ENCODE measurements at regions of chr6 and their contacts with region 1.

Region 1: GRCh38 chr6:53410508-53411258 is 61.9 kb upstream of the ELOVL5 start:
- DNase-seq: peak; percentile 37
- ATAC-seq: peak; percentile 100
- H3K4me3 ChIP-seq: no peak overlapping the region
- H3K27ac ChIP-seq: no peak overlapping the region
- H3K4me1 ChIP-seq: peaks cover 4% of the 10 kb centered on the region; the same call in 1 of the 2 replicates
- H3K27me3 ChIP-seq: no peaks in the 10 kb centered on the region
- CTCF ChIP-seq: peak; percentile 85 to 92 (median 86)
- EP300 ChIP-seq: 0 out of 4 replicates have a peak, but pooled peaks of 1 of the 2 experiments have one; percentile 14
- POLR2A ChIP-seq: no peak
- RAD21 ChIP-seq: peak; percentile 86

Region 2: DNA sequence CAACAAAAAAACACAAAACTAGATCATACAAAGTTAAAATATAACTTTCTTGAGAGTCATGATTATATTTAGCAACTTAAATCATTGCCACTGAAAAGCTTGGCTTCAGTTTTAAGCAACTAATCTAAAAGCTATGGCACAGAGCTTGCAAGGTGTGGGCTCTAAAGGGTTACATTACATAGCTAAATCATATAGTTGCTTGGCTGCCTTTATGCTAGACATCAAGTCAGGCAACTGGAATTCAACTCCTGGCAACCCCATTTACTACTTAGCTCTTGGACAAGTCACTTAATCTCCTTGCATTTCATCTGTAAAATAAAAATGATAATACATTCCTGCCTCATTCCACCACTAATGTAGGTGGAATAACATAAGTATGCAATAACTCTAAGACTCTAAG is 221.1 kb before region 1 on chr6:
- CTCF ChIA-PET with region 1: interaction called, 19 read pairs
- POLR2A ChIA-PET with region 1: no interaction called
- RAD21 ChIA-PET with region 1: interaction called, 20 read pairs
- SMC1A ChIA-PET with region 1: interaction called, 4 read pairs
- in situ Hi-C with region 1: no loop called
- intact Hi-C with region 1: no loop called
- DNase-seq: no peak
- ATAC-seq: peak; percentile 20; the same call in 2 of the 3 replicates
- H3K4me3 ChIP-seq: no peak overlapping the region
- H3K27ac ChIP-seq: no peak overlapping the region
- H3K4me1 ChIP-seq: no peaks in the 10 kb centered on the region; the same call in 1 of the 2 replicates
- H3K27me3 ChIP-seq: no peaks in the 10 kb centered on the region
- CTCF ChIP-seq: no peak
- EP300 ChIP-seq: no peak
- POLR2A ChIP-seq: no peak
- RAD21 ChIP-seq: no peak

Region 3: GRCh38 chr6:53294095-53294494 is 116.6 kb before region 1 on chr6:
- CTCF ChIA-PET with region 1: interaction called, 14 read pairs
- POLR2A ChIA-PET with region 1: no interaction called
- RAD21 ChIA-PET with region 1: interaction called, 3 read pairs
- SMC1A ChIA-PET with region 1: interaction called, 6 read pairs
- in situ Hi-C with region 1: no loop called
- intact Hi-C with region 1: no loop called
- DNase-seq: no peak
- ATAC-seq: peak; percentile 61
- H3K4me3 ChIP-seq: no peak overlapping the region
- H3K27ac ChIP-seq: no peak overlapping the region
- H3K4me1 ChIP-seq: no peaks in the 10 kb centered on the region
- H3K27me3 ChIP-seq: no peaks in the 10 kb centered on the region
- CTCF ChIP-seq: peak; percentile 36 to 61 (median 60); a peak in 5 of 6 replicates
- EP300 ChIP-seq: no peak
- POLR2A ChIP-seq: no peak
- RAD21 ChIP-seq: peak; percentile 58

Region 4: DNA sequence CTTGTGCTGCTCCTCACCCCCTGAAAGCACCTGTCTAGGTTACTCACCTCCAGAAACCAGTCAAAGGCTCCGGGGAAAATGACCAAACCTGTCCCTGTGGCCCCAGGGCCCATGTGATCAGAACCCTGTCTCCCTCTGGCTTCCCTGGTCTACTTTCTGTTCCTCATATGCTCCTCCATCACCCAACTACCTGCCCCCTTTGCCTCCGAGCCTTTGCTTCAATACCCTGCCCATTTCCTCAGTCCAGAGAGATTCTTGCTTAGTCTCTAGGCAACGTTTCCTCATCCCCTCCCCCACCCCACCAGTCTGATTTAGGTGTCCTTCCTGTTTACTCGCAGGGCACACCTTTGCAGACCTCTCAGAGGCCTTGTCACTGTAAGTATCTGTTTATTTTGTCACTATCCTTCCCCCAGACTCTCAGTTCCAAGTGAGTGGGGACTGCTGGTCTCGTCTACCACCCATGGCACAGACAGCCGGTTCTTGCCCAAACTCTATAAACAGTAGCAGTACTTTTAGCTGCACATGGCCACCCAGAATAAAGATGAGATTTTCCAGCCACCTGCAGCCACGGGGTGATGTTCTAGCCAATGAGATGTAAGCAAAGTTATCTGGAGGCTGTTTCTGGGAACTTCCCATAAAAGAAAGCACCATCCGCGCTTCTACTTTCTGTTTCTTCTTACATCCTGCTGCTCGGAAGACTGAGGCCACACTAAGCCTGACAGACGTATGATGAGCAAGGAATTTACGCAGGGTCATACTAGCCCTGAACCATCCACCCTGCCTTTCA is 75.3 kb before region 1 on chr6:
- CTCF ChIA-PET with region 1: interaction called, 10 read pairs
- POLR2A ChIA-PET with region 1: no interaction called
- RAD21 ChIA-PET with region 1: interaction called, 6 read pairs
- SMC1A ChIA-PET with region 1: interaction called, 24 read pairs
- in situ Hi-C with region 1: no loop called
- intact Hi-C with region 1: no loop called
- DNase-seq: peak; percentile 88
- ATAC-seq: peak; percentile 90
- H3K4me3 ChIP-seq: peak overlapping the region; percentile 72
- H3K27ac ChIP-seq: peak overlapping the region; percentile 85
- H3K4me1 ChIP-seq: peaks cover 22% of the 10 kb centered on the region
- H3K27me3 ChIP-seq: no peaks in the 10 kb centered on the region
- CTCF ChIP-seq: no peak
- EP300 ChIP-seq: peak in 1 of 2 experiments; percentile 68; a peak in 2 of 4 replicates
- POLR2A ChIP-seq: peak; percentile 34; the same call in 1 of the 2 replicates
- RAD21 ChIP-seq: no peak

Region 5: DNA sequence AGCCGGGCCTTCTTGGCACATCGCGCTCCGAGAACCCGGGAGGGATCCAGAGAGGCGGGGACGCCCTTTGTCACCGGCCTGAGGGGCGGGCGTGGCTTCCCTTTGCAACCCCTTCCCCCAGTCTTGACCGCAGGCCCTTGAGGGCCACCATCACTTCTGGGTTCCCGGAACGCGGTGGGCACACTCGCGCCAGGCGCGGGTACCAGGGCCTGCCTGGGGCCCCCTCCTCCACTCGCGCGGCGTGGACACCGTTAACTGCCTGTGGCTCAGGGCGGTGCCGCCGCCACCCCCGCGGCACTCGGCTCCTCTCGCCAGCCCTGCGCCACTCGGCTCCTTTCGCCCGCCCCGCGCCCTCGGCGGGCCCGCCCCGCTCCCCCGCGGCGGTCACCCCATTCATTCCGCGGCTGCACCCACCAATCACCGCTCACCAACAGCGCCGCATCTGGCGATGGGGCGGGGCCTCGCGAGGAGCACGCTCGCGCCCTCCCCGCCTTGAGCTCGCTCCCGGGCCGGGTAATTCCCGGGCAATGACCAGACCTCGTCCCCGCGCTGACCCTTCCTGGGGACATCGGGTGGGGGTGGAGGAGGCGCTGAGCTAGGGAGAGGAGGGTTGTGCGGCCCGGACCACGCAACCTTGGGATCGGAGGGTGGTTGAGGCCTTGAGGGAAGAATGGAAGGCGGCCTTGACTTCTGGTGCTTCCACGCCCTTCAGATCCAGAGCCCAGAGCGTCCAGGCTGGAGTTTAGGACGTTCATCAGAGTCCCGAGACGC is 51.4 kb before region 1 on chr6:
- CTCF ChIA-PET with region 1: interaction called, 14 read pairs
- POLR2A ChIA-PET with region 1: interaction called, 6 read pairs
- RAD21 ChIA-PET with region 1: interaction called, 5 read pairs
- SMC1A ChIA-PET with region 1: interaction called, 6 read pairs
- in situ Hi-C with region 1: no loop called
- intact Hi-C with region 1: loop called (anchors 2 kb)
- DNase-seq: peak; percentile 78
- ATAC-seq: peak; percentile 95
- H3K4me3 ChIP-seq: peak overlapping the region; percentile 76
- H3K27ac ChIP-seq: peak overlapping the region; percentile 86
- H3K4me1 ChIP-seq: peaks cover 17% of the 10 kb centered on the region
- H3K27me3 ChIP-seq: no peaks in the 10 kb centered on the region
- CTCF ChIP-seq: no peak
- EP300 ChIP-seq: 0 out of 4 replicates have a peak, but pooled peaks of 1 of the 2 experiments have one; percentile 8
- POLR2A ChIP-seq: peak; percentile 94
- RAD21 ChIP-seq: no peak

Region 6: GRCh38 chr6:53437557-53438202 is 27.0 kb after region 1 on chr6:
- CTCF ChIA-PET with region 1: interaction called, 62 read pairs
- POLR2A ChIA-PET with region 1: interaction called, 6 read pairs
- RAD21 ChIA-PET with region 1: interaction called, 52 read pairs
- SMC1A ChIA-PET with region 1: interaction called, 76 read pairs
- in situ Hi-C with region 1: no loop called
- intact Hi-C with region 1: loop called (anchors 1 kb)
- DNase-seq: peak; percentile 27
- ATAC-seq: peak; percentile 69
- H3K4me3 ChIP-seq: no peak overlapping the region
- H3K27ac ChIP-seq: no peak overlapping the region
- H3K4me1 ChIP-seq: peaks cover 4% of the 10 kb centered on the region; the same call in 1 of the 2 replicates
- H3K27me3 ChIP-seq: peaks cover 0 to 5% of the 10 kb centered on the region in 2 experiments; a peak in 1 of 4 replicates
- CTCF ChIP-seq: peak; percentile 64 to 77 (median 67)
- EP300 ChIP-seq: no peak
- POLR2A ChIP-seq: no peak
- RAD21 ChIP-seq: peak; percentile 90